GM18951 (cell line): ENCODE measurements at regions of chr12 and their contacts with region 1.

Region 1: GRCh38 chr12:45728630-45729232 is 775 bp upstream of the ARID2 start:
- POLR2A ChIP-seq: peak; percentile 92

Region 2: DNA sequence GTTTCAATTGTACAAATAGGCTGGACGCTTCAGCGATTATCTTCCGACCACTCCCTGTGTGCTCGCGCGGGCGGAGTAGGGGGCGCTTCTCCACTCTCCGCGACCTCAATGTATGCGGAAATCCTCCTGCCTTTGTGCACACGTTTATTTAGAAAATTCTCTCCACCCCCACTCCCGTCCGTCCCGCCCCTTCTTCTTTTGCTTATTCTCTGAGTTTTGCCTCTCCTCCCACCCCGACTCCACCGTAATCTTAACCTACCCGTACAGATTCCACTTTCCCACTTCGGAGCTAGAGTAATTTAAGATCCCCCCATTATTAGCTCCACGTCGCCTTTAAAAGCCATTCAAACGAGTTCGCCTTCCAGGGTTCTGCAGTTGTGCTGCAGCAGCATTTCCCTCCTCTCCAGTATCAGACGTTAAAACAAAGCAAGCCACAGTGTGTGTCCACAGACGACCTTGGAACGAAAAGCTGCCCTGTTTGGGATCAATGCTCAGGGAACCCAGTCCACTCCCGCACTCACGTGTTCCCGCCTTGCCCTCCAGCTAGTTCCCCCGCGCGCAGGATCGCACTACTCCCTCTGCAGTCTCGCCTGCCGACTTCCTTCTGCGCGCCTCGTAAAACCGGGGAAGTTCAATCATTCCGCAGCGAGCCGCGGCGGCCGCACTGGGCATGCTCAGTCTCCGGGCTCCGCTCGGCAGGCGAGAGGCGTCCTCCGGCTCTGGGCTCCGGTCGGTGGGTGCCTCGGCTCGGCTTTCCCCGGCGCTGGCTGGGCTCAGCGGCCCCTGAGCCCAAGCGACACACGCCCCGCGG is 513.1 kb before region 1 on chr12 and contains the start of gene ANO6:
- in situ Hi-C with region 1: loop called (anchors 25 kb)
- POLR2A ChIP-seq: peak; percentile 82

Region 3: GRCh38 chr12:45388545-45388944 is 340.2 kb before region 1 on chr12:
- in situ Hi-C with region 1: no loop called
- POLR2A ChIP-seq: no peak

Region 4: DNA sequence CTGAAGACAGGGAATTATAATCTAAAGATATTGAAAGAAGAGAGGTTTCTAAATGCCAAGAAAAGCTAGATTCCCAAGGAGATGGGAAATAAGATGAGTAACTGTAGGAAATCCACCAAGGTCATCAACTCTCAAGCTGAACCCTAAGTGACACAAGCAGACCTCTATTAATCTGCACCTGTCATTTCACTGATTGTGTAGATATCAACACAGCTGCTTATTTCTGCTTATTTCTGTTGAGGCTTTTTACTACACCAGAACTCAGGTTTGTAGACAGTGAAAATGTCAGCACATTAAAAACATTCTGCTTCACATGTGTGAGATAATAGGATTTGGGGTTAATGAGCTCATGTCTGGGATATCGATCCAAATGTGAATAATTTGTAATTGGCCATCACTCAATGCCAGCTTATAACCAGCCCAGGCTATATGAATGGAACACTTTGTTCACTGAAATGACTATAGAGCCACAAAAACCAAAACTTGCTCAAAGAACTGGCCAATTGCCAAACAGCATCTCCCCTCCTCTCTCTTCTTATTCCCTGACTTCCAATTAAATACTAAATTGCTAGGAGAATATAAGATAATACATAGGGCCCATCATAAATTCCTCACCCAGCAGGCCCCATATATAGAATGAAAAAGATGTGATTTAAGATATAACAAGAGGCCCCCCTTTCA is 187.9 kb before region 1 on chr12:
- in situ Hi-C with region 1: no loop called
- POLR2A ChIP-seq: no peak

Region 5: GRCh38 chr12:45674583-45674982 is 54.1 kb before region 1 on chr12:
- in situ Hi-C with region 1: no loop called
- POLR2A ChIP-seq: no peak